Cardiac septum (tissue), 1 donor: ENCODE measurements at regions of chr3 and their contacts with region 1.

Region 1: DNA sequence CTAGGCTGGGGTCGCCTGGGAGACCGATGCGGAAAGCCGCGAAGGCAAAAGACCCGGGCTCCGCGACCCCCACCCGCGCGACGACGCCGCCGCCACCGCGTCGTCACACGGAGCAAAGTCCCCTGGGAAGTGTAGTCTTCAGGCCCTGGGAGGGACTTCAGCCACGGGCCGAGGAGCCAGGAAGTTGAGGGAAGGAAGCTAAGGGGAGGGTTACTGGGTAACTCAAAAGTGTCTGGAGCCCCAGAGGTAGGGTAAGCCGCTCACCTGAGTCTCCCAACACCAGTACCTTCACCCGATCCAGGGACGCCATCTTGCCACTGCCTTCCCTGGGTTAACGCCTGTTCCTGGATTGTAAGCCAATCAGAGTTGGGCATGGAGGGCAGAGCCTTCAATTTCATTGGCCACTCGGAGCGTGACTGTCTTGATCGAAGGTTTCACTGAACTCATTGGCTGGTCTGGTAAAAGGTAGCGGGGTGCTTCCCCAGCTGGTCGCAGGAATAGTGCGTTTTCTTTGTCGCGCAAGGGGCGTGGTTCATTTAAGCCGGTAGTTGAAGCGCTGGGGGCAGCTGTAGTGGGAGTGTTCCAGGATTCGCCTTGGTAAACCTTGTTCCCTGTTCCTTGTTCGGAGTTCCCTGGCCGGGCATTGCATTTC is at the starts of genes GTF2E1 and RABL3:
- DNase-seq: peak; percentile 98
- total RNA-seq, gene GTF2E1: 13.2 TPM
- total RNA-seq, gene RABL3: 22.8 TPM

Region 2: DNA sequence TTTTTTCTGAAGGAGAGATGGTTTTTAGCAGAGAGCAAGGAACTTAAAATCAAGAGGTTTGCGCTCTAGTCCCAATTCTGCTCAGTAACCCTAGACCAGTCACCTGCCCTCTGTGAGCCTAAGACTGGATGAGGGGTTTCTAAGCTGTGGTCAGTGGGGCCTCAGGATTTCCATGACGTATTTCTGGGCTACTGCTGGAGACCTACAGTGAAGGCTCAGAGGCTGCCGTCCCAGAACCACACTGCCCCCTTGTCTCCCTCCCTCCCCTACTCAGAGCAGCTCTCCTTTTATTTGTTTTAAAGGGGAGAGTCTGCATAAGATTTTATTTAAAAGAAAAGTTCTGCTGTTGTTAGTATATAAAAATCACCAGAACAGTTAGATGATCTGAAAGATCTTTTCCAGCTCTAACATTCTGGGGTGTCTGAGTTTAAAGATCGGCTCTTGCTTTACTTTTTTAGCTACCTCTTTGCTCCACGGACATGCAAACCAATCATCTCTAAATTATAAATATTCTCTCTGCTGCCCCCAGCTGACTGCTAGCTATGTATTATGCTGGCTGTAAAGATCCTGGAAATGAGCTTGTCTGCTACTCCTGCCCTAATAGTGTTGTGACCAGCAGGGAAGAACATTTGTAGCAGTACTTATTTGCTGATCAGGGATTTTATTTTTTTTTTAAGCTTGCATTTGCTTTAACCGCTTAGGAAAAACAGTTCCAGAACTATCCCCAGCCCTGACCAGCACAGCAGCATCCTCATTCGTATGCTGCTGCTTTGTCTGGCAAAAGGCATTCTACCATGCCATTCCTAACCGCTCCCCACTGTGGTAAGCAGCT is 174.7 kb before region 1 on chr3:
- intact Hi-C with region 1: loop called (anchors 5 kb)
- DNase-seq: no peak

Region 3: DNA sequence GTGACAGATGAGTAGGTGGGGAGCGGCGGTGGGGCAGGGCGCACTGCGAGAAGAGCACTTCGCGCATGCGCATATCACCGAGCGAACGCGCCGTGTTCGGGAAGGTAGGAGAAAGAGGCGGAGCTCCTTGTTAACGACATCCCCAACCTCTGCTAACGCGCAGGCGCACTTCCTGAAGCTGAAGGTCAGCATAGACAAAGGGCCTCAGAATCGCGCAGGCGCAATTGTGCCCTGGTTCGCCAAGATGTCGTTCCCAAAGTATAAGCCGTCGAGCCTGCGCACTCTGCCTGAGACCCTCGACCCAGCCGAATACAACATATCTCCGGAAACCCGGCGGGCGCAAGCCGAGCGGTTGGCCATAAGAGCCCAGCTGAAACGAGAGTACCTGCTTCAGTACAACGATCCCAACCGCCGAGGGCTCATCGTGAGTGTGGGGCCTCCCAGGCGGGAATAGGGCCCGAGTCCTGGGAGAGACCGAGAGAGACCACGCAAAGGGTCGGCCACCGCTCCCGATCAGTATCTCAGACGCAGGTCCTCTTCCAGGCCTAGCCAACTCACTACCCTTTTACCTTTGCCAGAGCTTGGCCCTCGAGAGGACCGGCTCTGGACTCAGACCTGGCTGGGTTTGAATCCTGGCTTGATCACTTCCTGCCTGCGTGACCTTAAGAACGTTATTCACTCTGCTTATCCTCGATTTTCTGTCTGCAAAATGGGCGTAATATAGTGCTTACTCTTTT is 146.0 kb before region 1 on chr3 and contains the start of gene NDUFB4:
- intact Hi-C with region 1: loop called (anchors 2 kb)
- DNase-seq: peak; percentile 99
- total RNA-seq, gene NDUFB4: 360 TPM

Region 4: DNA sequence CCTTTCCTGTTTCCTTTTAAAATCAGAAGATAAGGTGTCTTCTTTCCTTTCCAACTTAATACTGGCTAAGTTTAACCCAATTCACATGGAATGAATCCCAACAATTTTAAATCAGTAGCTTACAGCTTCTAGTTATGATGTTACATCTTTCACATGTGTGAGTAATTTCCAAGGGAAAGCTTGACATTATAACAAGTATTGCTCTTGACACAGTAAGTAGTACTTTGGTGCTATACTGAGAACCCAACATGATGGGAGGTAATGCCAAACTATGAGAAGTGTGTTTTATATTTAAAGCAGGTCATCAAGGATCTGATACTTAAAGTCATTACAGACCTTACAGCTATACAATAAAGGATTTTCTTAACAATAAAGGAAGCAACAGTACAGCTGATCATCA is 29.1 kb before region 1 on chr3:
- intact Hi-C with region 1: no loop called
- DNase-seq: no peak

Region 5: GRCh38 chr3:120894303-120894702 is 152.0 kb after region 1 on chr3:
- intact Hi-C with region 1: no loop called
- DNase-seq: no peak